ENCODE measurements at regions of chr7 and their contacts with region 1.

Region 1: DNA sequence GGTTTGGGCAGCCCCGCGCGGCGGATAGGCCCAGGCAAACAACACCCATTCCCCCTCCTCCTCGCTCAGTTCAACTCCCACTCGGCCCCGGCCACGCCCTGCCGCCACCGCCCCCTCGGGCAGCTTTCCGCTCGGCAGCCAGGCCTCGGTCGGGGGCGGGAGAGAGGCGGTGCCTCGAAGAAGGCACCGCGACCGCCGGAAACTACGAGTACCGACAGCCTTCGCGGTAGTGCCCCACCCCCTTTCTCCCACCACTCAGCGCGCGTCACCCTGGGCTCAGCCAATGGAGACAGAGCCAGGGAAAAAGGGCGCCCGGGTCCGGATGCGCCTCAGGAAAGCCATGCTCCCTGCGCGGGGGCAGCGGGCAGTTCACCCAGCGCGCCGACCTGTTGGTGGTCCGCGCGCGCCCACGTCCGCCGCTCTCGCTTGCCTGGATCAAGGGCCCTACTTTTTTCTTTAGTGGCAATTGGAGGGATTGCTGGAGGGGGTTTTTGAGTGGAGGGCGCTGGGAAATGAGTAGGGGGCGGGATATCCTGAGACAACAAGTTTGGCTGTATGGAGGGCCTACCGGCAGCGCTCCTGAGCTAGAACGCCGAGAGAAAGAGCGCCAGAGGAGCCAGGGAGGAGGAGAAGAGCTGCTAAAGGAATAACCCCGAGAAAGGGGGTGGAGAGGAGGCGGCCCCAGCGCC is 557 bp upstream of the SP4 start:
- DNase-seq: peak; percentile 99 to 100
- H3K4me3 ChIP-seq: peak overlapping the region; percentile 80
- H3K4me3 Mint-ChIP-seq: peak overlapping the region; percentile 98
- H3K27ac Mint-ChIP-seq: peak overlapping the region; percentile 99
- H3K4me1 ChIP-seq: peaks cover 6% of the 10 kb centered on the region; the same call in 1 of the 2 replicates
- H3K4me1 Mint-ChIP-seq: peaks cover 16% of the 10 kb centered on the region
- H3K27me3 ChIP-seq: no peaks in the 10 kb centered on the region
- H3K27me3 Mint-ChIP-seq: no peaks in the 10 kb centered on the region
- CTCF ChIP-seq: no peak

Region 2: GRCh38 chr7:21253740-21254687 is 173.3 kb before region 1 on chr7:
- CTCF ChIA-PET with region 1: no interaction called
- POLR2A ChIA-PET with region 1: interaction called, 13 read pairs
- intact Hi-C with region 1: no loop called
- DNase-seq: peak; percentile 72 to 79
- H3K4me3 ChIP-seq: no peak overlapping the region
- H3K4me3 Mint-ChIP-seq: peak overlapping the region; percentile 20
- H3K27ac Mint-ChIP-seq: no peak overlapping the region
- H3K4me1 ChIP-seq: peaks cover 12% of the 10 kb centered on the region; the same call in 1 of the 2 replicates
- H3K4me1 Mint-ChIP-seq: no peaks in the 10 kb centered on the region
- H3K27me3 ChIP-seq: no peaks in the 10 kb centered on the region
- H3K27me3 Mint-ChIP-seq: no peaks in the 10 kb centered on the region
- CTCF ChIP-seq: peak; percentile 63 to 79

Region 3: DNA sequence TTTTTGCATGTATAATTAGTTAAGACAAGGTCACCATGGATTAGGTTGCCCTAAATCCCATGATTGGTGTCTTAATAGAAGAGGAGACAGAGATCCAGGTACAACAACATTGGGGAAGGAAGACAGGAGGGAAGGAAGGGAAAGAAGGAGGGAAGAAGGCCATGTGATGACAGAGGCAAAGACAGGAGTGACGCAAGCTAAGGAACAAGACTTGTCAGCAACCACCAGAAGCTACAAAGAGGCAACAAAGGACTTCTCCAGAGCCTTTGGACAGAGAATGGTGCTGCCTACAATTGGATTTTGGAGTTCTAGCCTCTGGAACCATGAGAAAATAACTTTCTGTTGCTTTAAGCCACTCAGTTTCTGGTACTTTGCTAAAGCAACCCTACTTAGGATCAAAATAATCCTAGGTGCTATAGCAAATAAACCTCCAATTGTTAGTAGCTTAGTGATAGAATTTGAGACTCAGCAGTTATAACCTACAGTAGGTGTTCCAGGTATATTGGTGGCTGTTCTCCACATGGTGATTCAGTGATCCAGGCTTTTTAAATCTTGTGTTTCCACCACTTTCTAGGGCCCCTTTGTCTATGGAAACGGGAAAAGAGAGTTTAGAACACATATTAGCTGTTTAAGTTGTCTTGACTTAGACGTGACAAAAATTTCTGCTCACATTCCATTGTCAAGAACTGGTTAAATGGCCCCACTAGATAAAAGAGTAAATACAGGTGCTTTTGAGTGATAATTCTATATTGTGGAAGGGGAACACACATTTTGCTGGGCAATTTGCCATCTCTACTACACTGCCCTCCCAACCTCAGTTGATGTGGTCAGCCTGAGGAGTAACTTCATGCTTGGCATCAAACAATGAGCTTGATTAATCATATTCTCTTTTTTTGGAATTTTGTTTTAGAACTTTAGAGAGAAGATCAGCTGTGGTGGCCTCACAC is 69.9 kb before region 1 on chr7:
- CTCF ChIA-PET with region 1: no interaction called
- POLR2A ChIA-PET with region 1: interaction called, 14 read pairs
- intact Hi-C with region 1: no loop called
- DNase-seq: no peak
- H3K4me3 ChIP-seq: no peak overlapping the region
- H3K4me3 Mint-ChIP-seq: no peak overlapping the region
- H3K27ac Mint-ChIP-seq: no peak overlapping the region
- H3K4me1 ChIP-seq: peaks cover 20% of the 10 kb centered on the region
- H3K4me1 Mint-ChIP-seq: peaks cover 20% of the 10 kb centered on the region
- H3K27me3 ChIP-seq: no peaks in the 10 kb centered on the region
- H3K27me3 Mint-ChIP-seq: no peaks in the 10 kb centered on the region
- CTCF ChIP-seq: no peak

Region 4: DNA sequence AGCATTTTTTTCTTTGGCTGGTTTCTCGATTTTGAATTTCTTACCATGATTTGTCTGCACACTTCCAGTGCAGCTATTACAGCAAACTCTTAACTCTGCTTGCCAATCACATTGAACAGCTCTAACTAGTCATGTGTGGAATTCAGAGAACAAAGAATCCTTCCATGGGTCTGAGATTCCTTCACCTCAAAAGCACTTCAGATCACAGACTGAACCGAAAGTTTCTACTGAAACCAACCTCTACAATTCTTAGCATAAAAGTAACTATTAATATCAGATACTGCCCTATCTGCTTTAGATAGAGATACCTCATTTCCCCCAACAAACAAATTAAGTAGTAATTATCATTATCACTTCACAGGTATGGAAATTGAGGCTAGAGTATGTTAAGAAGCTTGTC is 56.0 kb before region 1 on chr7:
- CTCF ChIA-PET with region 1: no interaction called
- POLR2A ChIA-PET with region 1: interaction called, 18 read pairs
- intact Hi-C with region 1: loop called (anchors 1 kb)
- DNase-seq: no peak
- H3K4me3 ChIP-seq: no peak overlapping the region
- H3K4me3 Mint-ChIP-seq: no peak overlapping the region
- H3K27ac Mint-ChIP-seq: peak overlapping the region; percentile 45
- H3K4me1 ChIP-seq: peaks cover 31% of the 10 kb centered on the region
- H3K4me1 Mint-ChIP-seq: peaks cover 11% of the 10 kb centered on the region
- H3K27me3 ChIP-seq: no peaks in the 10 kb centered on the region
- H3K27me3 Mint-ChIP-seq: no peaks in the 10 kb centered on the region
- CTCF ChIP-seq: no peak

Region 5: GRCh38 chr7:21443149-21443841 is 16.0 kb after region 1 on chr7:
- CTCF ChIA-PET with region 1: no interaction called
- POLR2A ChIA-PET with region 1: interaction called, 10 read pairs
- intact Hi-C with region 1: no loop called
- DNase-seq: no peak
- H3K4me3 ChIP-seq: no peak overlapping the region
- H3K4me3 Mint-ChIP-seq: no peak overlapping the region
- H3K27ac Mint-ChIP-seq: no peak overlapping the region
- H3K4me1 ChIP-seq: no peaks in the 10 kb centered on the region
- H3K4me1 Mint-ChIP-seq: no peaks in the 10 kb centered on the region
- H3K27me3 ChIP-seq: no peaks in the 10 kb centered on the region
- H3K27me3 Mint-ChIP-seq: no peaks in the 10 kb centered on the region
- CTCF ChIP-seq: no peak

Region 6: DNA sequence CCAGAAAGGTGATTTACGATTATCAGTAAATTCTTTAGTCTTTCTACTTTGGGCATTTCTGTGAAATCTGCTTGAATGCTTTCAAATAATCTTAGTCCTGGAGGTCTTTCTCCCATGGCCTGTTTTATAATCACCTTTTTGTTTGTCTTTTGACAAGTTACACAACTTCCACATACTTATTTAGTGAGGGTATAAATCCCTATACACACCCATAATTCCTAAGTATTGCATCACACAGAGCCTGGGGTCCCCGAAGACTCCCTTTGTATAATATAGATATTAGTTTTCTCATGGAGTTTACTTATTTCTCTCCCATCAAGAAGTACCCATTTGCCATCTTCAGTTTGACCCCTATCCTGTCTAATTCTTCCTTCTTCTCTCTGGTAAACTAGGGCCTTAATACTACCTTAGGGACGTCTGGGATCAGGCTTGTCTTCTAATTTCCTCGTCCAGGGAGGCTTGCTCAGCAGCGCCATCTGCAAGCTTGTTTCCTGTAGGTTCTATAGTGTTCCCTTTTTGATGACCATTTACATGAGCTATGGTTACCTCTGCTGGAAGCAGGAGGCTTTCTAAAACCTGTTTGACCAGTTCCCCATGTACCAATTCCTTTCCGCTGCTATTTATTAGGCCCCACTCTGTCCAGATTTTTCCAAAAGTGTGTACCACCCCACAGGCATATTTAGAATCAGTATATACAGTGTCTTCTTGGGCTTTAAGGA is 123.7 kb after region 1 on chr7:
- CTCF ChIA-PET with region 1: no interaction called
- POLR2A ChIA-PET with region 1: interaction called, 16 read pairs
- intact Hi-C with region 1: no loop called
- DNase-seq: peak; percentile 69 to 73
- H3K4me3 ChIP-seq: no peak overlapping the region
- H3K4me3 Mint-ChIP-seq: peak overlapping the region; percentile 16
- H3K27ac Mint-ChIP-seq: peak overlapping the region; percentile 61
- H3K4me1 ChIP-seq: peaks cover 22% of the 10 kb centered on the region
- H3K4me1 Mint-ChIP-seq: peaks cover 13% of the 10 kb centered on the region
- H3K27me3 ChIP-seq: no peaks in the 10 kb centered on the region
- H3K27me3 Mint-ChIP-seq: no peaks in the 10 kb centered on the region
- CTCF ChIP-seq: peak; percentile 18 to 23

Region 7: GRCh38 chr7:21767300-21767900 is 340.1 kb after region 1 on chr7:
- CTCF ChIA-PET with region 1: interaction called, 12 read pairs
- POLR2A ChIA-PET with region 1: no interaction called
- intact Hi-C with region 1: loop called (anchors 1 kb)
- DNase-seq: peak; percentile 83 to 91
- H3K4me3 ChIP-seq: no peak overlapping the region
- H3K4me3 Mint-ChIP-seq: no peak overlapping the region
- H3K27ac Mint-ChIP-seq: no peak overlapping the region
- H3K4me1 ChIP-seq: peaks cover 19% of the 10 kb centered on the region
- H3K4me1 Mint-ChIP-seq: peaks cover 24% of the 10 kb centered on the region
- H3K27me3 ChIP-seq: no peaks in the 10 kb centered on the region
- H3K27me3 Mint-ChIP-seq: no peaks in the 10 kb centered on the region
- CTCF ChIP-seq: peak; percentile 91 to 93